GM10248 (cell line): ENCODE measurements at regions of chr5 and their contacts with region 1.

Region 1: GRCh38 chr5:144191998-144192397 is 21.3 kb downstream of the KCTD16 start:
- DNase-seq: peak; percentile 75
- CTCF ChIP-seq: peak; percentile 65

Region 2: DNA sequence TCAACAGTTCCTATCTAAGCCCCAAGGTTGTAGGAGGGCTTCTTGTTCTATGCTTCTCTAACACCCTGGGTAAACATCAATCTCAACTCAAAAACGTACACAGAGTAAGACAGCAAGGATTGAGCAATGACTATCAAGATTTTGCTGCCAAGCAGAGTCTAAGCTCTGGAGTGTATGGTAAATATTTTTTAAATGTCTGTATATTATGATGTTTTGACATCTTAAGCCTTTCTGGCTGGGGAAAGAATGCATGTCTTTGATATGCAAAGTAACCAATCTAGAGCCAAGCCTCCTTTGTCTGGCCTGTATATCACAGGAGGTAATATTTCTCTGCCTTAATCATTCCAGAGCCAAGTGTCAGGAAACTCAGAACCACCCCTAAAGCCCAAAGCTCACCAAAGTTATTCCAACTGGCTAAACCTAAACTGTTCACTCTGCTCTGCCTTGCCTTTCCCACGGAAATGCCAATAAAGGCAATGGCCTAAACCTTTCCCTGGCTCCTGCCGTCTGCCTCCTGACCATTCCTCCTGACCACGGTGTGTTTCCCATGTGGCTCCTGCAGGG is 66.8 kb before region 1 on chr5:
- CTCF ChIA-PET with region 1: no interaction called
- POLR2A ChIA-PET with region 1: no interaction called
- DNase-seq: no peak
- CTCF ChIP-seq: no peak

Region 3: DNA sequence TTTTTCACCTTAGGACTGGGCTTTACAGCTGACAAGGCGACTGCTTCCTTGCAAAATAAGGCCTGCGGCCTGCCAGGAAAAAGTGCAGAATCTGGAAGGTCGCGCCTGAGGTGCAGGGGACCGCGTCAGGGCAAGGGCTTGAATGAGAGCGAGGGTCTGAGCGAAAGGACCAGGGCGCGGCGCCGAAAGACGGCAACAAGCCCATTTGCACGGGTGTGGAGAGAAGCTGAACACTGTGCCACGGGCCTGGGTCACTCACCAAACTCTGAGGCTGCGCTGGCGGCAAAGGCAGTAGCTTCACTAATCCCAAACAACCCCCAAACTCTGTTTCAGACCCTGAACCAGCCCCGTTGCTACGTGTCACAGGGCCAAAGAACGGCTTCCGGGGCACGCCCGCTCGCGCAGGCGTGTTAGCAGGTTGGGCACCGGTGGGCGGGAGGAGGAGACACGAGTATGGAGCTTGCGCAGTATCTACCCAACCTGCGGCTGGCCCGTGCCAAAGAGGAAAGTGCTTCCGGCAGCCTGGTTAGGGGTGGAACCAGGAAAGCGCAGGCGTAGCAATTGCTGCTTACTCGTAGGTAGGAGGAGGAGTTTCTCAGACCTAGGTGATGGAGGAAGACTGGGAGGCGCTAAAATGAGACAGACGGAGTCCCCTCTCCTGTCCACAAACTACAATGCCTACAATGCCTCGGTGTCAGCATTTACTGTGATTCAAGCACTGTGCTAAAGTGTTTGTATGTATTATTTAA is 21.5 kb before region 1 on chr5 and contains the starts of genes KCTD16 and YIPF5:
- CTCF ChIA-PET with region 1: interaction called, 21 read pairs
- POLR2A ChIA-PET with region 1: no interaction called
- DNase-seq: peak; percentile 96
- CTCF ChIP-seq: no peak

Region 4: GRCh38 chr5:144436007-144436406 is 244.0 kb after region 1 on chr5:
- CTCF ChIA-PET with region 1: no interaction called
- POLR2A ChIA-PET with region 1: no interaction called
- DNase-seq: no peak
- CTCF ChIP-seq: no peak